ENCODE measurements at regions of chr10 and their contacts with region 1.

Region 1: GRCh38 chr10:79316671-79317431 is 30.4 kb upstream of the PPIF start:
- DNase-seq: peak; percentile 46
- H3K4me3 Mint-ChIP-seq: peak overlapping the region; percentile 74
- H3K27ac Mint-ChIP-seq: peak overlapping the region; percentile 92
- H3K4me1 Mint-ChIP-seq: peaks cover 65% of the 10 kb centered on the region
- H3K27me3 Mint-ChIP-seq: no peaks in the 10 kb centered on the region

Region 2: GRCh38 chr10:79242620-79243152 is 74.2 kb before region 1 on chr10:
- CTCF ChIA-PET with region 1: no interaction called
- POLR2A ChIA-PET with region 1: interaction called, 17 read pairs
- DNase-seq: peak; percentile 74
- H3K4me3 Mint-ChIP-seq: peak overlapping the region; percentile 77
- H3K27ac Mint-ChIP-seq: peak overlapping the region; percentile 79
- H3K4me1 Mint-ChIP-seq: peaks cover 74% of the 10 kb centered on the region
- H3K27me3 Mint-ChIP-seq: no peaks in the 10 kb centered on the region

Region 3: DNA sequence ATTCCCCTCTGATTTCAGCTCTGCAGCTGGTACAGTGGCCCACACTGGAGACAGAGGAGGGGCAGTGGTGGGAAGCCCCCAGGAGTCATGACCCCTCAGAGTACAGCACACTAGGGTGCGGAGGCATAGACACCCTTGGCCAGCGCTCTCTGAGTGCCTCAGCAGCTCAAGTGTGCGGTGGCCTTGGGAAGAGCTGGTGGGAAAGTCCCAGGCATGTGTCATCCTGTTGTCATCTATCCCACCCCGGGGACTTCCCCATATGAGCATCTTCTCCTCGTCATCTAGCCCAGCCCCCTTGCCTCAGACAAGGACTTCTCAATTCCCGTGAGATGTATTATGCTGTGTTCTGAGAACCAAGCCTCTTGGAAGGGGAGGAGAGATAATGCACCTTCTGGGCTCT is 14.9 kb after region 1 on chr10:
- CTCF ChIA-PET with region 1: interaction called, 4 read pairs
- POLR2A ChIA-PET with region 1: interaction called, 53 read pairs
- DNase-seq: peak; percentile 82
- H3K4me3 Mint-ChIP-seq: no peak overlapping the region
- H3K27ac Mint-ChIP-seq: peak overlapping the region; percentile 70
- H3K4me1 Mint-ChIP-seq: peaks cover 38% of the 10 kb centered on the region
- H3K27me3 Mint-ChIP-seq: no peaks in the 10 kb centered on the region

Measured in activated CD4-positive, alpha-beta memory T cell treated with anti-CD3 and anti-CD28 coated beads, Interleukin-2, amount 10 ng/mL, durations not matched to agents 7 days and 5 days (primary cell).